PC-3 (cell line): ENCODE measurements at regions of chr19 and their contacts with region 1.

Region 1: DNA sequence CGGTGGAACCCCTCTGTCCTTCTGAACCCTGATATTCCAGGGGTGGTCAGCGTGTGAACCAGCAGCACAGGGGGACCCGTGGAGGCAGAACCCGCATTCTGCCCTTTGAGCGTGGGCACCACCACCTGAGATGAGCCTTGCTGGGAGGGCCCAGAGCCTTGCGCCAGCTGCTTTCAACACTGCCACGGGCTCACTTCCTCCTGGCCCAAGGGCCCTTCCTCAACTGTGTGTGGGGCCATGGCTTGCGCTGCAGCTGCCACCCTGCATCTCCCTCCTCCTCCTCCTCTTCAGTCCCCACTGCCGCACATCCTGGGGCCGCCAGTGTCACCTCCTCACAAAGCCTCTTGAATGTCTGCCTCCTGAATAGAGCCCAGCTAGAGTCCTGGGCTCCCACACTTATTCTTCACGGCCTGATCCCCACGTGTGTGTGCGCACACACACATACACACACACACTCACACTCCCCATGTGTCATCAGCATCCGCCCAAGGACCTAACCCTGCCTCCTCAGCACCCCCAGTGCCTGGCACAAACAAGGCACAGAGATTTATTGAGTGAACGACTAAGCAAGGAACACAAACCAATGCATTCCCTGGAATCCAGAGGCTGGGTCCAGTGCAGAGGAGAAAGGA is 26.9 kb upstream of the TMEM160 start:
- DNase-seq: no peak
- ATAC-seq: no peak
- H3K4me3 ChIP-seq: no peak overlapping the region
- H3K27ac ChIP-seq: no peak overlapping the region
- H3K4me1 ChIP-seq: peaks cover 5% of the 10 kb centered on the region; the same call in 1 of the 2 replicates
- H3K27me3 ChIP-seq: no peaks in the 10 kb centered on the region
- CTCF ChIP-seq: no peak

Region 2: DNA sequence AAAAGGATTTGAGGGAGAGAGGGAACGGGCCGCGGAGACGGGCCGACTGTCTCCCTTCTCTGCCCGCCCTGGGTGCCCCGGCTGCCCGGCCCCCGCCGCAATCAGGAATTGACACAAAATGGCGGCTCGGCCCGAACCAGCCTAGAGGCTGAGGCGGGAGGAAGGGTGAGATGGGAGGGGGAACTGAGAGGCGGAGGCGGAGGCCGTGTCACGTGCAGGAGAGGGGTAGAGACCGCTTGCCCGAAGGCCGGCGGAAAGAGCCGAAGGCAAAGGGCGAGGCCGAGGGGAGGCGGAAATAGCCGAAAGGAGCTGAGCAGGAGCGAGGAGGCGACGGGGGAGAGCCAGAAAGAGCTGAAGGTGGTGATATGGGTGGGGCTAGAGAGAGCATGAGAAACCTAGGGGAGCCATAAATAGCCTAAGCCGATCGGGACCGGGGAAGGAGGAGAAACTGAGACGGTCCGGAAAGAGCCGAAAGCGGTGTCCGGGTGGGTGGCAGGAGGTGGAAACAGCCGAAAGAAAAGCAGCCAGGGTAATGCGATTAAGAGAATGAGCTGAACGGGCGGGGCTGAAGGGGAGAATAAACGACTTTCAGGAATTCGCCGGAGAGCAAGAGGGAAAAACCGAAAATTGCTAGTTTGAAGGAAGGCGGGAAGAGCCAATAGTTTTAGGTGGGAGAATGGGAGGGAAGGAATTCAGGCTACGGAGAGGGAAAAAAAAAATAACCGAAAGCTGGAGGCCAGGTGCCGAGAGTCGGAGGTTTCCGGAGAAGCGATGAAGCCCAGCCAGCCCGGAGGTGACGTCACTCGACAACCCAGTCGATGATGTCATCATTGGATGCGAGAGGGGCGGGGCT is 37.9 kb after region 1 on chr19 and contains the start of gene ZC3H4:
- CTCF ChIA-PET with region 1: interaction called, 5 read pairs
- POLR2A ChIA-PET with region 1: interaction called, 6 read pairs
- intact Hi-C with region 1: loop called (anchors 5 kb)
- DNase-seq: peak; percentile 97
- ATAC-seq: peak; percentile 85
- H3K4me3 ChIP-seq: peak within 1 kb of the TSS; percentile 93
- H3K27ac ChIP-seq: peak within 1 kb of the TSS; percentile 99
- H3K4me1 ChIP-seq: peaks cover 21% of the 10 kb centered on the region
- H3K27me3 ChIP-seq: no peaks in the 10 kb centered on the region
- CTCF ChIP-seq: no peak
- total RNA-seq, gene ZC3H4: 13.4 and 20.0 TPM in 2 replicates